Sigmoid colon (tissue), 7 donors: ENCODE measurements at regions of chr3 and their contacts with region 1.

Region 1: GRCh38 chr3:188052169-188053030 is 101.6 kb upstream of the LPP start:
- DNase-seq: peak; percentile 99
- H3K4me3 ChIP-seq: peak overlapping the region in 3 of 4 donors; percentile 10 to 13 (median 12)
- H3K27ac ChIP-seq: peak overlapping the region; percentile 87 to 96 (median 90)
- H3K4me1 ChIP-seq: peaks cover 0 to 38% (median 37%) of the 10 kb centered on the region in 4 donors
- H3K27me3 ChIP-seq: no peaks in the 10 kb centered on the region
- CTCF ChIP-seq: peak; percentile 67 to 86 (median 72)
- EP300 ChIP-seq: peak; percentile 22 to 94 (median 61)
- POLR2A ChIP-seq: no peak

Region 2: DNA sequence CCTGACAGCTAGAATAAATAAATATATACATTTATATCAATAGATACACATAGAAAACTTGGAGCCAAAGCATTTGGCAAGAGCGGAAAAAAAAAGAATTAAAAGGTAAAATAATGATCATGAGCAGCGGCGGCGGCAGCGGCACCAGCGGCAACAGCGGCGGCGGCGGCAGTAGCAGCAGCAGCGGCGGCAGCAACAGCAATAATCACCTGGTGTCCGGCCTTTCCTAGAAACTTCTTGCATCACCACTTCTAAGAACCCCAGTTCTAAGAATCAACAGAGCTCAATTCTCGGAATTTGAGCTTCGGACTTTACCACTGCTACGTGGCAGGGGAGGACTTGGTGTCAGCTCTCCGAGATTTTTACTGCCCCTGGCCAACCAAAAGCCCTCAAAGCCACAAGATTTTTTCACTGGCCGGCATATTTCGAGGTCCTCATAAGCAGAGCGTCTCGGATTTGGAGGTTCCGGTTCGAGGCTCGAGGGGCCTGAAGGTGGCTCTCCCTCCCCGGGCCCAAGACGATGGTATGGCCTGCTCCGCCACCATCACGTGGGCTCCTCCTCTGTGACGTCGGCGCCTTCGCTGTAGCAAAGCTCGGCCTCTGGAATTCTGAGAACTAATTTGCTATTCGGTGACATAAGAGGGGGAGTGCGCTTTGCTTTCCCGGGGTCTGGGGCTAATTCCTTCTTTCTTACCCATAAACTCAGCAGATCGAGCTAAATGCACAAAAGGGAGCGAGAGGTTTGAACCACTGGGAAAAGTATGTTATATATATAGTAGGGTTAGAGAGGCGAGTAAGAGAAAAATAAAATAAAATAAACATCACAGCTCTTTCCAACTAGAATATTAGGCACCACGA is 307.0 kb before region 1 on chr3 and contains the start of gene BCL6:
- intact Hi-C with region 1: loop called (anchors 1 kb)
- DNase-seq: peak; percentile 98
- H3K4me3 ChIP-seq: peak within 1 kb of the TSS; percentile 53 to 88 (median 68)
- H3K27ac ChIP-seq: peak within 1 kb of the TSS; percentile 90 to 99 (median 96)
- H3K4me1 ChIP-seq: peaks cover 3 to 62% (median 44%) of the 10 kb centered on the region in 4 donors
- H3K27me3 ChIP-seq: no peaks in the 10 kb centered on the region
- CTCF ChIP-seq: peak in 1 of 4 experiments; percentile 6
- EP300 ChIP-seq: peak; percentile 72 to 98 (median 89)
- POLR2A ChIP-seq: peak; percentile 95 to 99
- total RNA-seq, gene BCL6: 51.4 to 233 (median 80.7) TPM

Region 3: DNA sequence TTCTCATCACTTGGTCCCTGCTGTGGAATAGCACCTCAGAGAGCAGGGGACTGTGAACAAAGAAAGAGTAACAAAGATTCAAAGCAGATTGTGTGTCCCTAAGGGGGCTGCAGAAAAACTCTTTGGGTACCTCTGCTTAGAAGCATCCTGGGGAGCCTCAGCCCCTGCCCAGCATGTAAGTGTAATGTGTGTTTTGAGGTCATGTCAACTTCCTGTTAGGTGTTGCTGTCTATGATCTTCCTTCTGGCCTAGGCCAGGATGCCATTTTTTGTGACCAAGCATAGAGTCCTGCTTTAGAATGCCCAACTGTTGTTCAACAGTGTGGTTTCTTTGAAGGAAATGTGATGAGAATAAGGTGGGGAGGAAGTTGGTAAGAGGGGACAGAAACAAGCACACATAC is 230.0 kb before region 1 on chr3:
- intact Hi-C with region 1: no loop called
- DNase-seq: no peak
- H3K4me3 ChIP-seq: no peak overlapping the region
- H3K27ac ChIP-seq: no peak overlapping the region
- H3K4me1 ChIP-seq: no peaks in the 10 kb centered on the region
- H3K27me3 ChIP-seq: no peaks in the 10 kb centered on the region
- CTCF ChIP-seq: no peak
- EP300 ChIP-seq: no peak
- POLR2A ChIP-seq: no peak

Region 4: DNA sequence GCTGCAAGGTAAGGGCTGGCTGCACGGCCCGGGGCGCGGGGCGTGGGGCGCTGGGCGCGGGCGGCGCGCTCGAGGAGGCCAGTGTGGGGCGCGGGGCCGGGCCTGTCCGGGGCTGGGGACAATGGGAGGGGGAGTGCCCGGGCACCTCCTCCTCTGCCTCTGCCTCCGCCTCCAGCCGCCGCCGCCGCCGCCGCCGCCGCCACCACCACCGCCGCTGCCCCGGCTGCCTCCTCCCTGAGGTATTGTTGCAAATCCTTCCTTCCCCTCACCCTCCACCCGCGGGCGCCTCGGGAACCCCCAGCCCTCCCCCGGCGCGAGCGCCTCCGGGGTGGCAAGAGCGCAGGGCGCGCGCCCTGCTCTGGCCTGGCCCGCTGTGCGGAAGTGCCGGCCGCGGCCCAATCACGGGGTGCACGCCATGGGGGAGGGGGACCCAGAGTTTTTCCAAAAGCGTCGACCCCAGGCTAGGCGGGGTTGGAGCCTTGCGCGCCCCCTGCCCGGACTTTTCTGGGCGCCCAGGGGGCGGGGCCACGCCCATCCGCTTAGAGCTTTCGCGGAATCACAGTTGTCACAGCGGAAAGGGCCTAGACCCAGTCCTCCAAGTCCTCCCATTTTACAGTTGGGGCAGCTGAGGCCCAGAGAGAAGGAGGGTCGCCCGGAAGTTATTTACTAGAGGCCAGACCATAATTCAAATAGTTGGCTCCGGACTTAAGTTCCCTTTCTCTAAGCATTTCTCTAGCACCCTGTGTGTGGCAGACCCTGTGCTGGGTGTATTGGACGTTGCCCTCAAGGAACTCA is 101.8 kb after region 1 on chr3 and contains the start of gene LPP:
- intact Hi-C with region 1: loop called (anchors 2 kb)
- DNase-seq: peak; percentile 92
- H3K4me3 ChIP-seq: peak within 1 kb of the TSS; percentile 68 to 93 (median 84)
- H3K27ac ChIP-seq: peak within 1 kb of the TSS; percentile 95 to 99 (median 98)
- H3K4me1 ChIP-seq: peaks cover 0 to 57% (median 47%) of the 10 kb centered on the region in 4 donors
- H3K27me3 ChIP-seq: no peaks in the 10 kb centered on the region
- CTCF ChIP-seq: no peak
- EP300 ChIP-seq: peak in 3 of 4 donors; percentile 2 to 64 (median 14)
- POLR2A ChIP-seq: no peak
- total RNA-seq, gene LPP: 824 to 1,773 (median 1,187) TPM

Region 5: DNA sequence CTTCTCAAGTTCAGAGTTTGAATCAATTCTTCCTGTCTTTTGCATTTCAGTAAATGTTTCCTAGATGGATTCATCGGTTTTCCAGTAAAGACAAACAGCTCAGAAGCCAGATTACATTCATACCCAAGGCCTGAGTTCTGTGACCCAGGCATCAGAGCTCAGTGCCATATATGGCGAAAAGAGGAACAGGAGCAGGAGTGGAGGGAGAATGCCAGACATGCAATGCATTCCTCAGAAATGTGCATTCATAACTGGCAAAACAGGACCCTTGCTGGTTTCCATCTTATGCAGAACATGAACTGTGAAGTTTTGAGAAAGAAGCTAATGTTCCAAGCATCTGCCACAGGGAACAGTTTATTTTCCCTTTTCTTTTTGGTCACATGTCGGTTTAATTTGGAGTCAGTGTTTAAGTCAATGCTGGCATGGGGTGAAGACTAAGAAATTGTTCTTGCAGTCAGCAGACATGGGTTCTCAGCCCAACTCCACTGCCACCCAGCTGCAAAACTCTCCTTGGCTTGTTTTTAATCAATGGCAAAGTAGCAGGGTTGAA is 218.1 kb after region 1 on chr3:
- intact Hi-C with region 1: loop called (anchors 5 kb)
- DNase-seq: no peak
- H3K4me3 ChIP-seq: no peak overlapping the region
- H3K27ac ChIP-seq: peak overlapping the region; percentile 88 to 94 (median 90)
- H3K4me1 ChIP-seq: peaks cover 0 to 97% (median 95%) of the 10 kb centered on the region in 4 donors
- H3K27me3 ChIP-seq: no peaks in the 10 kb centered on the region
- CTCF ChIP-seq: no peak
- EP300 ChIP-seq: peak in 3 of 4 donors; percentile 41 to 93 (median 77)
- POLR2A ChIP-seq: no peak

Region 6: DNA sequence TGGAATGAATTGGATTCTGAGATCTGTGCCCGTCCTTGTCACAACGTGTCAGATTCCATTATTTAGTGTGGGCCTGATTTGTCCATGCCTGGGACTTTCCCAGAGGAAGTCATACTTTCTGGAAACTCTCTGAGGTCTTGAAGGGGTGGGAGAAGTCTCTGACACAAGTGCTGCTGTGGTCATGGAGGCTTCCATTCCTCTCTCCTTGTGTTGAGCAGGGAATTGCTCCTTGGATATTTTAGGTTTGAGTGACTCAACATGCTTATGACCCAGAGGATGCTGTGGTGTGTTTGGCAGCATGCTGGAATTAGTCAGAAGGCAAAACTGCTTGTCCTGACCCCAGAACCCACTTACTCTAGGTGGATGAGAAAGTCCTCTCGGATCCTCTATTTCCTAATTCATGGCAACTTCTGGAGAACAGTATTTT is 233.7 kb after region 1 on chr3:
- intact Hi-C with region 1: no loop called
- DNase-seq: peak; percentile 86
- H3K4me3 ChIP-seq: no peak overlapping the region
- H3K27ac ChIP-seq: peak overlapping the region; percentile 65 to 94 (median 88)
- H3K4me1 ChIP-seq: peaks cover 0 to 88% (median 81%) of the 10 kb centered on the region in 4 donors
- H3K27me3 ChIP-seq: no peaks in the 10 kb centered on the region
- CTCF ChIP-seq: no peak
- EP300 ChIP-seq: peak in 2 of 4 donors; percentile 60 to 78
- POLR2A ChIP-seq: no peak

Region 7: GRCh38 chr3:188578576-188579363 is 526.4 kb after region 1 on chr3:
- intact Hi-C with region 1: loop called (anchors 10 kb)
- DNase-seq: peak; percentile 90
- H3K4me3 ChIP-seq: no peak overlapping the region
- H3K27ac ChIP-seq: peak overlapping the region; percentile 65 to 85 (median 82)
- H3K4me1 ChIP-seq: peaks cover 0 to 83% (median 67%) of the 10 kb centered on the region in 4 donors
- H3K27me3 ChIP-seq: no peaks in the 10 kb centered on the region
- CTCF ChIP-seq: no peak
- EP300 ChIP-seq: peak in 2 of 4 donors; percentile 11 to 75
- POLR2A ChIP-seq: no peak

Region 8: GRCh38 chr3:188947401-188948280 is 895.2 kb after region 1 on chr3:
- intact Hi-C with region 1: loop called (anchors 2 kb)
- DNase-seq: peak; percentile 99
- H3K4me3 ChIP-seq: peak overlapping the region; percentile 12 to 46 (median 42)
- H3K27ac ChIP-seq: peak overlapping the region; percentile 92 to 97 (median 96)
- H3K4me1 ChIP-seq: peaks cover 0 to 63% (median 50%) of the 10 kb centered on the region in 4 donors
- H3K27me3 ChIP-seq: no peaks in the 10 kb centered on the region
- CTCF ChIP-seq: peak; percentile 24 to 64 (median 30)
- EP300 ChIP-seq: peak; percentile 100
- POLR2A ChIP-seq: peak; percentile 28 to 32